GM12878 (cell line): ENCODE measurements at regions of chr9 and their contacts with region 1.

Region 1: DNA sequence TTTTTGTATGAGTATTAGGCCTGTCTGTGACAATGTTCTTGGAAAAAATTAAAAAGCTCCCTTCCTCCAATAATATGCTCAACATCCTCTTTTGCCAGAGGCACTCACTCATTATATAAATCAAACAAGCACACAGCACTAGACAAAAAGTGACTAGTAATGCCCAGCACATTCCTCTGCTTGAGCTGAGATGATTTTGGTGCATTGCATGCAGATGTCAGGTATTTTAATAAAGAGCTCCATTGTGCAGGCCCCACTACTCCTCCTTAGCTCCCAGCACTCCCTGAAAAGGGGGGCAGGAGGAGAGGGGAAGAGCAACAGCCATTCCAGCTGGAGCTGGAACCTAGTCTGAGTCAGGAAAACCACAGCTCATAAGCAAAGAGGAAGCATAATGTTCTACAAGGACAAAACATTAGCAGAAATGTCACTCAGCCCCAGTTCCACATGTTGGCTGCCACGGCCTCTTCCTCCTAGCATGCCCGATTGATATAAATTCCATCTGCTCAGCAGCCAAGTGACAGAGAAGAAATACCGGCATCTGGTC is 348.5 kb downstream of the BNC2 start:
- DNase-seq: no peak
- ATAC-seq: no peak
- H3K4me3 ChIP-seq: no peak overlapping the region
- H3K27ac ChIP-seq: no peak overlapping the region
- H3K4me1 ChIP-seq: no peaks in the 10 kb centered on the region
- H3K27me3 ChIP-seq: no peaks in the 10 kb centered on the region
- CTCF ChIP-seq: no peak
- EP300 ChIP-seq: no peak
- POLR2A ChIP-seq: no peak
- RAD21 ChIP-seq: no peak

Region 2: GRCh38 chr9:16368237-16369087 is 153.5 kb before region 1 on chr9:
- CTCF ChIA-PET with region 1: no interaction called
- POLR2A ChIA-PET with region 1: no interaction called
- RAD21 ChIA-PET with region 1: no interaction called
- SMC1A ChIA-PET with region 1: no interaction called
- in situ Hi-C with region 1: no loop called
- intact Hi-C with region 1: no loop called
- DNase-seq: no peak
- ATAC-seq: no peak
- H3K4me3 ChIP-seq: no peak overlapping the region
- H3K27ac ChIP-seq: no peak overlapping the region
- H3K4me1 ChIP-seq: no peaks in the 10 kb centered on the region
- H3K27me3 ChIP-seq: no peaks in the 10 kb centered on the region; a peak in 1 of 4 replicates
- CTCF ChIP-seq: no peak
- EP300 ChIP-seq: no peak
- POLR2A ChIP-seq: no peak
- RAD21 ChIP-seq: no peak

Region 3: DNA sequence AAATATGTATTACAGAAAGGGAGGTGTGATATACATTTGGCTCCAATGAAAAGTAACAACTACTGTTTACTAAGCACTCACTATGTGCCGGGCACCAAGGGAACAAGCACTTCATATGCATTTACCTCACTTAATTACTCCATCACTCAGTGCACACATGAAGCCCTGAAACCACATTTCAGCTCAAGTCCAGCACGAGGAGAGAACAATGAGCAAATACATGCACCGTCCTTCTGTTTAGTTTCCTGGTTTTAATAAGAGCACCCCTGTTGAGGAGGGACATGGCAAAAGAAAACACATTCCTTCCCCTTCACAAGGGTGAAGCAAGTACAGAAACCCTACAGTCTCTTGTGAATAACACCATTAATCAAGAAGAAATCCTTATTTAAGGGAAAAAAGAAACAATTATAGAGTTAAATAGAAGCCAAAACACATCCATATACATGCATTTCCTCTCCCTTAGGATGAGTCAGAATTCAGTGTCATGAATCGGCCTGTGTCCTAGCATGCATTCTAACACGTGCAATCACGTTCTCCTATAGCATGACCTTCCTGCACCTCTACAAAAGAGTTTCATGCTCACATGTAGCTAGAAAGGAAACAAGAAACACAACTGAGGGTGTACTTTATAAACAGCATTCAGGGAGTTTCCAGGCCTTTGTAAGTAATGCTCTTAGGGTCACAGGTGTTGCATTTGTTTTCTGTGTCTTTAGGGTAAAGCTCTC is 63.1 kb before region 1 on chr9:
- CTCF ChIA-PET with region 1: interaction called, 9 read pairs
- POLR2A ChIA-PET with region 1: interaction called, 5 read pairs
- RAD21 ChIA-PET with region 1: interaction called, 3 read pairs
- SMC1A ChIA-PET with region 1: interaction called, 8 read pairs
- in situ Hi-C with region 1: no loop called
- intact Hi-C with region 1: loop called (anchors 2 kb)
- DNase-seq: peak; percentile 76
- ATAC-seq: peak; percentile 80
- H3K4me3 ChIP-seq: no peak overlapping the region
- H3K27ac ChIP-seq: peak overlapping the region; percentile 29
- H3K4me1 ChIP-seq: peaks cover 8% of the 10 kb centered on the region; the same call in 1 of the 2 replicates
- H3K27me3 ChIP-seq: no peaks in the 10 kb centered on the region
- CTCF ChIP-seq: no peak
- EP300 ChIP-seq: no peak; a peak in 2 of 4 replicates
- POLR2A ChIP-seq: no peak
- RAD21 ChIP-seq: no peak

Region 4: GRCh38 chr9:16509997-16510396 is 11.9 kb before region 1 on chr9:
- CTCF ChIA-PET with region 1: interaction called, 10 read pairs
- POLR2A ChIA-PET with region 1: interaction called, 4 read pairs
- RAD21 ChIA-PET with region 1: interaction called, 10 read pairs
- SMC1A ChIA-PET with region 1: interaction called, 10 read pairs
- in situ Hi-C with region 1: no loop called
- intact Hi-C with region 1: no loop called
- DNase-seq: no peak
- ATAC-seq: peak; percentile 69
- H3K4me3 ChIP-seq: no peak overlapping the region
- H3K27ac ChIP-seq: no peak overlapping the region
- H3K4me1 ChIP-seq: no peaks in the 10 kb centered on the region
- H3K27me3 ChIP-seq: no peaks in the 10 kb centered on the region
- CTCF ChIP-seq: no peak
- EP300 ChIP-seq: no peak
- POLR2A ChIP-seq: no peak
- RAD21 ChIP-seq: no peak

Region 5: GRCh38 chr9:16575142-16575985 is 53.4 kb after region 1 on chr9:
- CTCF ChIA-PET with region 1: no interaction called
- POLR2A ChIA-PET with region 1: no interaction called
- RAD21 ChIA-PET with region 1: interaction called, 4 read pairs
- SMC1A ChIA-PET with region 1: interaction called, 4 read pairs
- in situ Hi-C with region 1: no loop called
- intact Hi-C with region 1: loop called (anchors 5 kb)
- DNase-seq: no peak
- ATAC-seq: peak; percentile 54
- H3K4me3 ChIP-seq: no peak overlapping the region
- H3K27ac ChIP-seq: no peak overlapping the region
- H3K4me1 ChIP-seq: no peaks in the 10 kb centered on the region
- H3K27me3 ChIP-seq: no peaks in the 10 kb centered on the region
- CTCF ChIP-seq: peak in 1 of 3 experiments; percentile 21; a peak in 1 of 6 replicates
- EP300 ChIP-seq: no peak
- POLR2A ChIP-seq: no peak
- RAD21 ChIP-seq: 0 out of 2 replicates have a peak, but pooled peaks have one; percentile 1

Region 6: GRCh38 chr9:17361378-17361777 is 839.4 kb after region 1 on chr9:
- CTCF ChIA-PET with region 1: no interaction called
- POLR2A ChIA-PET with region 1: no interaction called
- RAD21 ChIA-PET with region 1: no interaction called
- SMC1A ChIA-PET with region 1: no interaction called
- in situ Hi-C with region 1: no loop called
- intact Hi-C with region 1: no loop called
- DNase-seq: no peak
- ATAC-seq: no peak
- H3K4me3 ChIP-seq: no peak overlapping the region
- H3K27ac ChIP-seq: no peak overlapping the region
- H3K4me1 ChIP-seq: no peaks in the 10 kb centered on the region
- H3K27me3 ChIP-seq: no peaks in the 10 kb centered on the region
- CTCF ChIP-seq: no peak
- EP300 ChIP-seq: no peak
- POLR2A ChIP-seq: no peak
- RAD21 ChIP-seq: no peak